H1 (cell line): ENCODE measurements at regions of chr7 and their contacts with region 1.

Region 1: DNA sequence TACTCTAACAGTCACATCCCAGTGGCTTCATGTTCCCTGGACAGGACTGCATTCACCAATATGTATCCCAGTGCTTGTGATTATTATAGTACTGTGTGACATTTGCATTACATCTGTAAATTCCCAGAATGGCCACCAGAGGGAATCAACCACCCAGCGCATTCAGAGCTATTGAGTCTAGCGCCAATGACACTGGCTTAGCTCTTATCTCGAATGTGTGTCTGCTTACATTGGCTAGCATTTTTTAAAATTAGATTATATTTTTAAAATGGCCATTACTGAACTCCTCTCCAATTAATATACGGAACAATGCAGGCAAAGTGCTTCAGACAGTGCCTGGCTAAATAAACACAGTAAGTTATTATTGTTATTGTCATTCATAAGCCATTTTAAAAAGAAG is 36.3 kb downstream of the TRIL start:
- DNase-seq: no peak
- H3K4me3 ChIP-seq: no peak overlapping the region
- H3K27ac ChIP-seq: no peak overlapping the region
- H3K4me1 ChIP-seq: peaks cover 0 to 4% (median 0%) of the 10 kb centered on the region in 4 experiments; a peak in 3 of 7 replicates
- H3K27me3 ChIP-seq: no peaks in the 10 kb centered on the region
- CTCF ChIP-seq: peak; percentile 29 to 88 (median 87)
- EP300 ChIP-seq: no peak
- POLR2A ChIP-seq: no peak
- RAD21 ChIP-seq: peak; percentile 75 to 85

Region 2: DNA sequence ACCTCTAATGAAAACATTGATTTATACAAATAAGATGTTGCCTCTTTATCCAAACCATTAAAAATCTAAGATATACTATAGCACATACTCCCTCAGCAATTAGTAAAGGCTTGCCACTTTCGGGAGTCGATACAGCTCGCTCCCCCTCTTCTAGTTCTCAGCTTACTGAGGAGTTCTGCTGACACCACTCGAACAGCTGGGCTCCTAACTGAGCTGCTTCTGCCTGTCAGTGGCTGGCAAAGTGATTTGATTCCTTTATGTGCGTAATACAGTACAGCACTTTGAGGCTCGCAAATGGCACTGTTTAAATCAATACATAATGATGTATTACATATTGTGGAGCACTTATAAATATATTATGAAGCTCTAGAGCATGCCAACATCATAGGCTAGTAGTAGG is 267.7 kb before region 1 on chr7:
- CTCF ChIA-PET with region 1: no interaction called
- POLR2A ChIA-PET with region 1: no interaction called
- DNase-seq: no peak
- H3K4me3 ChIP-seq: no peak overlapping the region
- H3K27ac ChIP-seq: no peak overlapping the region
- H3K4me1 ChIP-seq: no peaks in the 10 kb centered on the region
- H3K27me3 ChIP-seq: no peaks in the 10 kb centered on the region
- CTCF ChIP-seq: no peak
- EP300 ChIP-seq: no peak
- POLR2A ChIP-seq: no peak
- RAD21 ChIP-seq: no peak

Region 3: GRCh38 chr7:28872226-28872625 is 49.6 kb before region 1 on chr7:
- CTCF ChIA-PET with region 1: interaction called, 12 read pairs
- POLR2A ChIA-PET with region 1: no interaction called
- DNase-seq: no peak
- H3K4me3 ChIP-seq: no peak overlapping the region
- H3K27ac ChIP-seq: no peak overlapping the region
- H3K4me1 ChIP-seq: no peaks in the 10 kb centered on the region
- H3K27me3 ChIP-seq: 0 out of 7 replicates have a peak, but pooled peaks cover 0 to 2% (median 0%) of the 10 kb centered on the region in 4 experiments
- CTCF ChIP-seq: no peak
- EP300 ChIP-seq: no peak
- POLR2A ChIP-seq: no peak
- RAD21 ChIP-seq: no peak

Region 4: DNA sequence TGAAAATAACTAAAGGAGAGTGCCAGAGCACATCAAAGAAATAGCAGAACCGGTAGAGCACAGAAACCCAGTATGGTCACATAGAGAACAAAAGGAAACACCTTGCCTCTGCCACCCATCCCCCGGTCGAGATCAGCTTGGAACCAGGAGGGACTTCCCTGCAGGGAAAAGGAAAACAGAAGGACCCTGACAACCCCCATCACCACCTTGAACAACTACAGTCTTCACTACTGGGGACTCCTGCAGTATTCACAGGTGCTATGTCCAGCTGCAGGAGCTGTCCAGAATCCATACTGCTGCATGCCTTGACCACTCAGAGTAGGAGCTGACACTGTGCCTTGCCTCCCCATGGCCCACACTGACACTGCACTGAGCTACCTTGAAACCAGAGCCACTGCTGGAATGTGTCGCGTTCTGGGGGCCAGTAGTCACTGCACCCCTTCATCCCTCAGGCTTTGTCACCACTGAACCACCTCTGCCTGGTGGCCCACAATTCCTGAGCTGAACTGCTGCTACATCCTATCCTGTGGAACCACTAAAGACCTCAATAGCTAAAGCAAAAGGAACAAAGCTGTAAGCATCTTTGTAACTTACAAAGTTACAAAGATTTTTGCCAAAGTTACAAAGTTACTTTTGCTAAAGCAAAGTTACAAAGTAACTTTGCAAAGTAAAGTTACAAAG is 30.5 kb before region 1 on chr7:
- CTCF ChIA-PET with region 1: interaction called, 11 read pairs
- POLR2A ChIA-PET with region 1: interaction called, 3 read pairs
- DNase-seq: peak; percentile 29 to 58
- H3K4me3 ChIP-seq: peak overlapping the region in 2 of 4 experiments; percentile 8 to 52; a peak in 4 of 8 replicates
- H3K27ac ChIP-seq: peak overlapping the region; percentile 90
- H3K4me1 ChIP-seq: peaks cover 3 to 9% (median 7%) of the 10 kb centered on the region in 4 experiments
- H3K27me3 ChIP-seq: no peaks in the 10 kb centered on the region
- CTCF ChIP-seq: no peak
- EP300 ChIP-seq: peak in 1 of 2 experiments; percentile 56; a peak in 1 of 3 replicates
- POLR2A ChIP-seq: peak in 1 of 2 experiments; percentile 48; a peak in 1 of 3 replicates
- RAD21 ChIP-seq: no peak; a peak in 1 of 4 replicates

Region 5: GRCh38 chr7:28933846-28934320 is 12.1 kb after region 1 on chr7:
- CTCF ChIA-PET with region 1: interaction called, 576 read pairs
- POLR2A ChIA-PET with region 1: interaction called, 4 read pairs
- DNase-seq: no peak
- H3K4me3 ChIP-seq: no peak overlapping the region
- H3K27ac ChIP-seq: no peak overlapping the region
- H3K4me1 ChIP-seq: peaks cover 1 to 12% (median 7%) of the 10 kb centered on the region in 4 experiments; a peak in 5 of 7 replicates
- H3K27me3 ChIP-seq: no peaks in the 10 kb centered on the region
- CTCF ChIP-seq: no peak
- EP300 ChIP-seq: no peak
- POLR2A ChIP-seq: no peak
- RAD21 ChIP-seq: no peak

Region 6: GRCh38 chr7:29078311-29079260 is 156.8 kb after region 1 on chr7:
- CTCF ChIA-PET with region 1: interaction called, 10 read pairs
- POLR2A ChIA-PET with region 1: no interaction called
- DNase-seq: no peak
- H3K4me3 ChIP-seq: no peak overlapping the region
- H3K27ac ChIP-seq: no peak overlapping the region
- H3K4me1 ChIP-seq: no peaks in the 10 kb centered on the region
- H3K27me3 ChIP-seq: no peaks in the 10 kb centered on the region
- CTCF ChIP-seq: no peak
- EP300 ChIP-seq: no peak
- POLR2A ChIP-seq: no peak
- RAD21 ChIP-seq: no peak

Region 7: GRCh38 chr7:29421010-29421956 is 499.5 kb after region 1 on chr7:
- CTCF ChIA-PET with region 1: interaction called, 11 read pairs
- POLR2A ChIA-PET with region 1: no interaction called
- DNase-seq: no peak
- H3K4me3 ChIP-seq: no peak overlapping the region
- H3K27ac ChIP-seq: no peak overlapping the region
- H3K4me1 ChIP-seq: no peaks in the 10 kb centered on the region
- H3K27me3 ChIP-seq: no peaks in the 10 kb centered on the region
- CTCF ChIP-seq: no peak
- EP300 ChIP-seq: no peak
- POLR2A ChIP-seq: no peak
- RAD21 ChIP-seq: no peak